Mucosa of descending colon (tissue), 3 donors: ENCODE measurements at regions of chr11 and their contacts with region 1.

Region 1: GRCh38 chr11:68257475-68258362 is 14.1 kb downstream of the C11orf24 start:
- DNase-seq: peak; percentile 96 to 100 (median 97)
- ATAC-seq: peak; percentile 96
- H3K4me3 ChIP-seq: no peak overlapping the region
- H3K4me1 ChIP-seq: peaks cover 6% of the 10 kb centered on the region
- CTCF ChIP-seq: peak; percentile 67

Region 2: GRCh38 chr11:68297812-68298658 is 40.3 kb after region 1 on chr11:
- intact Hi-C with region 1: loop called (anchors 1 to 5 kb)
- DNase-seq: peak; percentile 90 to 93 (median 90)
- ATAC-seq: peak; percentile 83
- H3K4me3 ChIP-seq: no peak overlapping the region
- H3K4me1 ChIP-seq: peaks cover 41% of the 10 kb centered on the region
- CTCF ChIP-seq: peak; percentile 98